Ascending aorta (tissue), 2 donors: ENCODE measurements at regions of chr15 and their contacts with region 1.

Region 1: DNA sequence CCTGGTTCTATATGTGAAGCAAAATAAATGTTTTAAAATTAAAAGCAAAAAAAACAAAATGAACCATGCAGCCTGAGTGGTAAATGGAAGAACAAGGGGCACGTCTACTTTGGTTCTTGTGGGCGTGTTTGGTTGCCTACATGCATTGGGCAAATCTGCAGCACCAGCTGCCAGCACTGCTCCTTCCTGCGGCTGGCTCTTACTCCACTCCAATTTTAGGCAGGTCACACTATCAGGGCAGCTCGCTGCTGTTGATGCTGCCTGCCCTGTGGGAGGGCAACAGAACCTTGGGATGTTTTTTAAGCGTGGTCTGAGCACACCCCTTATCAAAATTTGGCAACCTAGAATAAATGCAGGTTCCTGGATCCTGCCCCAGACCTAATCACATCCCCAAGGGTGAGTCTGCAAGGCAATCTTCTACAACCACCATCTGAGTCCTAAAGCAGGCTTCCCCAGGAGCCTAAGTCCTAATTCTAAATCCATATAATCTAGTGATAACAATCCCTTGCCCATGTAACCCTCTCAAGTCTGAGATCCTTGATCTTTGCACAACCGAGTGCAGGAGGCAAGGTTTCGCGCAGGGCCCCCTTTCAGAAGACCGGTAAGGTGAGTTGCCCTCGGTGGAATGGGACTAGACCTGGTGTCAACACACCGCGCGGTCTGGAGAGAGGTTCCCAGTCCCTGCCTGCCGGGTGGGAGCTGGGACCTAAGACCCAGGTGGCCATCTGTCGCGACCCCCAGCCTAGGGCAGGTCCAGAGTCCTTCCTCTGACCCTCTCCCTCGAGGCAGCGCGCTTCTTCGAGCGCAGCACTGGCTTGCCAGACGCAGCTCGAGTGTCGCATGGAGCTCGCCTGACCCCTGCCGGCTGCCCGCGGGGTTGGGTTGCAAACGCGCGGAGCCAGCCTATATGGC is 15.9 kb downstream of the IVD start:
- DNase-seq: peak in 1 of 2 donors; percentile 81
- H3K4me3 ChIP-seq: peak overlapping the region in 1 of 2 donors; percentile 45
- H3K27ac ChIP-seq: no peak overlapping the region
- H3K4me1 ChIP-seq: peaks cover 5 to 13% of the 10 kb centered on the region in 2 donors
- H3K27me3 ChIP-seq: no peaks in the 10 kb centered on the region
- CTCF ChIP-seq: peak; percentile 94 to 97 (median 94)

Region 2: GRCh38 chr15:40217159-40217824 is 204.2 kb before region 1 on chr15:
- intact Hi-C with region 1: loop called (anchors 2 kb)
- DNase-seq: no peak
- H3K4me3 ChIP-seq: no peak overlapping the region
- H3K27ac ChIP-seq: no peak overlapping the region
- H3K4me1 ChIP-seq: no peaks in the 10 kb centered on the region
- H3K27me3 ChIP-seq: no peaks in the 10 kb centered on the region
- CTCF ChIP-seq: peak; percentile 83 to 87 (median 85)

Region 3: DNA sequence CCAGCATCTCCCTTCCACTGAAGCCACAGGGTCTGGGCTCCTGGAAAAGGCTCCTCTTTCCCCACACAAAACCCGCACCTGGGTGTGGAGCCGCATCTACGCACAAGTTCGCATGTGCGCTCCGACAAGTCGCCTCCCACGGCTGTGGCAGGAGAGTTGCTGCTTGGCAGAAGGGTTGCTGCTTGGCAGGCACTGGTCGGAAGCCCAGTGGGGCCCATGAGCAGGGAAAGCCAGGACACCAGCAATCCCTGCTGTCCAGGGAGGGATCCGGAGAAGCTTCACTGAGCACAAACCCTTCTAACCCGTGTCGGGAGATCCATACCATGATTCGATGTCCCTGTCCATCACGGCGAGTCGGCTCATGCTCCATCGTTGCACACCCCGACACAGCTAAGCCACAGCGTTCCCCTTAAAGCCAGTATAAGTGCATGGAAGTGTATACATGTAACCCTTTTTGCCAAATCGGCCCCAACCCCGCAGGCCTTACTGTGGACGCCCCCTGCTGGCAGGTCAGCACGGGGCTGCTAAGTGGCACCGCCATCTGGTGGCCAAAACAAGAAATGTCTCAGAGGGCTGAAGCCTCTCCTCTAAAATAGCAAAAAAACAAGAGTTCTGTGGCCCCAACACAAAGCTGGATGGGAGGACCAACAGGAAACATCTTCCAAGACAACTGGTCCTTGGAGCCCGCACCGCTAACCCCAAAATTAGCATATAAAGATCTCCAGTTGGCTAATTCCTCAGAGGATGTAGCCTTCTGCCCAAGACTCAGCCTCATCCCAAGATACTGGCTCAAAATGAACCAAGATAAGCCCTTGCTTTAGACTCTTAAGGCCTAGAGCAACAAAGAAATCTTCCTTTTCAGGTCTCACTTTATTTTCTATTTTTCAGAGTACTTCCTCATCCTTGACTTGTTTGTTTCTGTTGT is 146.9 kb before region 1 on chr15:
- intact Hi-C with region 1: loop called (anchors 1 kb)
- DNase-seq: peak; percentile 31 to 89
- H3K4me3 ChIP-seq: no peak overlapping the region
- H3K27ac ChIP-seq: no peak overlapping the region
- H3K4me1 ChIP-seq: peaks cover 2% of the 10 kb centered on the region in 2 donors
- H3K27me3 ChIP-seq: peaks cover 2% of the 10 kb centered on the region
- CTCF ChIP-seq: peak; percentile 100

Region 4: GRCh38 chr15:40344631-40345120 is 76.8 kb before region 1 on chr15:
- intact Hi-C with region 1: loop called (anchors 2 kb)
- DNase-seq: no peak
- H3K4me3 ChIP-seq: no peak overlapping the region
- H3K27ac ChIP-seq: peak overlapping the region; percentile 98 to 99
- H3K4me1 ChIP-seq: peaks cover 20 to 45% of the 10 kb centered on the region in 2 donors
- H3K27me3 ChIP-seq: no peaks in the 10 kb centered on the region
- CTCF ChIP-seq: peak; percentile 69 to 87 (median 80)